CD8-positive, alpha-beta T cell (primary cell): ENCODE measurements at regions of chr22 and their contacts with region 1.

Region 1: DNA sequence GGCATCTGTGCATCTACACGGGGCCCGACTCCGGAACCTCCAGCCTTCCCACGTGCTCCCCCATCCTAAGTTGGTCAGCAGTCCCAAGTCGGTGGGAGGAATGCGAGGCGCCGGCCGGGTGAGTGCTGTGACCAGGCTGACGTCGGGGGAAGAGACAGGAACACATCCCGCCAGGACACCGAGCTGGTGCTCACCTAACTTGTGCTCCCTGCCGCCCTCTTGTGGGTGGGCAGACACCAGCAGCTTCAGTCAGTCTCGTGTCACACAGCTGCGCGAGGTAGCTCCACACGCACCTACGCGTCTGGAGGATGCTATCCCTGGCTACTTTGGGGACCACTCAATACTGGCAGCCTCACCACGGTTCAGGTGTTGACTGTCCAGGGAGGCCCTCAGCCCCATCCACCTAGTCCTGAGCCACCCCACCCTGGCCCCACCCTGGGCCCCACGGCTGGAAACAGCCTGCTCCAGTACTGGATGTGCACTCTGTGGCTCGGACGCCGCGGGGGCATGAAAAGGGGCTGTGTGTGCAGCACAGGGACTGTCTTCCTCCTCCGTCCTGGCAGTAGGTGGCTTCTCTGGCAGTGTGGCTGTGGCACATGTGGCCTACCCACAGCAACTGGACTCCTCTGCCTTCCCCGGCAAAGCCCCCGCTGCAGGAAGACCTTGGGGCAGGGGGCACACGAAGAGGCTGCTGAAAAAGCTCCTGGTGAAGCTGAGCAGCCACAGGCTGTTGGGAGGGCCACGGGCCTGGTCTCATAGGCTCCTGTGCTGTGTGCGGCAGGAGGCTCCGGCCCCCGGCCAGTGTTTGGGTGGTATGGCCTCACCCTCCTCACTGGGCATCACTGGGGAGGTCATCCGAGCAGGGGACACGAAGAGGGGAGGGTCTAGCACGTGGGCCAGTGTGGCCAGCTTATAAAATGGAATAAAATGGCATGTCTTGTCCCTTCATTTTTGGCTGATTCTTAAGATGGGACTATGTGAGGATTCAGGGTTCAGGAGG is 11.2 kb upstream of the BID start:
- DNase-seq: peak; percentile 48 to 82 (median 76)
- ATAC-seq: peak; percentile 67
- H3K4me3 ChIP-seq: no peak overlapping the region
- H3K4me3 Mint-ChIP-seq: no peak overlapping the region
- H3K27ac ChIP-seq: no peak overlapping the region
- H3K27ac Mint-ChIP-seq: no peak overlapping the region
- H3K4me1 ChIP-seq: peaks cover 21% of the 10 kb centered on the region
- H3K4me1 Mint-ChIP-seq: peaks cover 13% of the 10 kb centered on the region
- H3K27me3 ChIP-seq: no peaks in the 10 kb centered on the region
- H3K27me3 Mint-ChIP-seq: no peaks in the 10 kb centered on the region
- CTCF ChIP-seq: peak; percentile 74

Region 2: DNA sequence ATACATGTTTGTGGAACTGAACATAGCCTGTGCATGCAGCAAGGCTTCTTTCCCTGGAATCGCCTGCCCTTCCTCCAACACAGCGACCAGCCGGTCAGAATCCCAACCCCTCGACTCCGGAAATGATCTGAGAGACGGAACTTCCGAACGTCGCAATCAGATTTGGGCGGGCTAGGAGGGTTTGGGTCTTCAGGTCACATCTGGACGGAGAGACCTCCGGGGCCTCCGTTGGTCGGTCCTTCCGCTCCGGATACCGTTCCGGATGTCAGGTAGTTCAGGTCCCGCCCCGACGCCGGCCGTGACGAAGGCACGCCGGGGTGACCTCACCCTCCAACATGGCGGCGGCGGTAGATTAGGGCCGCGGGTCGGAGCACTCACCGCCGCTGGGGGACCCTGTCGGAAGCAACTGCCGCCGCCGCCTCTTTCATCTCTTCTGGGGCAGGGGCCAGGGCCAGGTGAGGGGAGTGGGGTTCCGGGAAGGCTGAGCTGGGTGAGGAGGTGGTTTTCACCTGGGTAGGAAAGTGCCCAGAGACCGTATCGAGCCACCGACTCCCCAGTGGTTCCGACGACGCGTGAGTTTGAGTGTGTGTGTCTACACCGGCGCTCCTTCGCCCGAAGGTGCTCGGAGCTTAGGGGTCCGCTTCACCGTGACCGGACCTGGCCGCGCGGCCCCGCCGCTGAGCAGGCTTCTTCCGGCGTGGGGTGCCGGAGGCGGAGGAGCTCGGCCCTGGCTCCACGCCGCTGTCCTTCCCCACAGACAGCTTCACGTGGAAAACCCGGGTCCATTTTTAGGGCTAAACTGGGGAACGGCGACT is 146.8 kb before region 1 on chr22 and contains the start of gene BCL2L13:
- CTCF ChIA-PET with region 1: no interaction called
- POLR2A ChIA-PET with region 1: no interaction called
- intact Hi-C with region 1: loop called in 1 of 2 experiments (anchors 5 kb)
- DNase-seq: peak; percentile 73 to 93 (median 89)
- ATAC-seq: peak; percentile 92
- H3K4me3 ChIP-seq: peak within 1 kb of the TSS; percentile 67 to 90
- H3K4me3 Mint-ChIP-seq: peak within 1 kb of the TSS; percentile 92
- H3K27ac ChIP-seq: peak within 1 kb of the TSS; percentile 98 to 99
- H3K27ac Mint-ChIP-seq: peak within 1 kb of the TSS; percentile 98
- H3K4me1 ChIP-seq: peaks cover 21% of the 10 kb centered on the region
- H3K4me1 Mint-ChIP-seq: peaks cover 29% of the 10 kb centered on the region
- H3K27me3 ChIP-seq: no peaks in the 10 kb centered on the region
- H3K27me3 Mint-ChIP-seq: no peaks in the 10 kb centered on the region
- CTCF ChIP-seq: no peak
- total RNA-seq, gene BCL2L13: 7.8 to 9.5 TPM

Region 3: GRCh38 chr22:17700778-17701177 is 84.7 kb before region 1 on chr22:
- CTCF ChIA-PET with region 1: no interaction called
- POLR2A ChIA-PET with region 1: no interaction called
- intact Hi-C with region 1: no loop called
- DNase-seq: no peak
- ATAC-seq: no peak
- H3K4me3 ChIP-seq: no peak overlapping the region
- H3K4me3 Mint-ChIP-seq: no peak overlapping the region
- H3K27ac ChIP-seq: no peak overlapping the region
- H3K27ac Mint-ChIP-seq: no peak overlapping the region
- H3K4me1 ChIP-seq: peaks cover 2% of the 10 kb centered on the region
- H3K4me1 Mint-ChIP-seq: peaks cover 6% of the 10 kb centered on the region
- H3K27me3 ChIP-seq: no peaks in the 10 kb centered on the region
- H3K27me3 Mint-ChIP-seq: no peaks in the 10 kb centered on the region
- CTCF ChIP-seq: no peak

Region 4: DNA sequence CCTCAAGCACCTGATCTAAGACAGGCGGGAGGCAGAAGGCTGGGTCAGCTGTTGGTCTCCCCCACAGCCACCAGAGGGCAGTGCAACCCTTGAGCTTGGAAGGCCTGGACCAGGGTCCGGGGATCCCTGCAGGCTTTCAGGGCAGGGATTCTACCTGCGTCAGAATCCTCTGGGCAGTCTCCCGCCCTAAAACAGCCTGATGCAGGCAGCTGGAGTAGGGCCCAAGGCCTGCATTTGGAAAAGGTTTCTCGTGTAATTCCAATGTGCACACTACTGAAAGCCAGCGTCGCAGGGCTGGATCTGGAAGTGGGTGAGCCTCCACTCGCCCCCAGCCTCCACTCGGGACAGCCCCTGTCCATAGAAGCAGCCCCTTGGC is 43.0 kb before region 1 on chr22:
- CTCF ChIA-PET with region 1: interaction called, 187 read pairs
- POLR2A ChIA-PET with region 1: interaction called, 3 read pairs
- intact Hi-C with region 1: loop called (anchors 1 kb)
- DNase-seq: peak; percentile 44 to 83 (median 67)
- ATAC-seq: peak; percentile 85
- H3K4me3 ChIP-seq: no peak overlapping the region
- H3K4me3 Mint-ChIP-seq: no peak overlapping the region
- H3K27ac ChIP-seq: no peak overlapping the region
- H3K27ac Mint-ChIP-seq: no peak overlapping the region
- H3K4me1 ChIP-seq: no peaks in the 10 kb centered on the region
- H3K4me1 Mint-ChIP-seq: peaks cover 7% of the 10 kb centered on the region
- H3K27me3 ChIP-seq: no peaks in the 10 kb centered on the region
- H3K27me3 Mint-ChIP-seq: no peaks in the 10 kb centered on the region
- CTCF ChIP-seq: peak; percentile 79

Region 5: DNA sequence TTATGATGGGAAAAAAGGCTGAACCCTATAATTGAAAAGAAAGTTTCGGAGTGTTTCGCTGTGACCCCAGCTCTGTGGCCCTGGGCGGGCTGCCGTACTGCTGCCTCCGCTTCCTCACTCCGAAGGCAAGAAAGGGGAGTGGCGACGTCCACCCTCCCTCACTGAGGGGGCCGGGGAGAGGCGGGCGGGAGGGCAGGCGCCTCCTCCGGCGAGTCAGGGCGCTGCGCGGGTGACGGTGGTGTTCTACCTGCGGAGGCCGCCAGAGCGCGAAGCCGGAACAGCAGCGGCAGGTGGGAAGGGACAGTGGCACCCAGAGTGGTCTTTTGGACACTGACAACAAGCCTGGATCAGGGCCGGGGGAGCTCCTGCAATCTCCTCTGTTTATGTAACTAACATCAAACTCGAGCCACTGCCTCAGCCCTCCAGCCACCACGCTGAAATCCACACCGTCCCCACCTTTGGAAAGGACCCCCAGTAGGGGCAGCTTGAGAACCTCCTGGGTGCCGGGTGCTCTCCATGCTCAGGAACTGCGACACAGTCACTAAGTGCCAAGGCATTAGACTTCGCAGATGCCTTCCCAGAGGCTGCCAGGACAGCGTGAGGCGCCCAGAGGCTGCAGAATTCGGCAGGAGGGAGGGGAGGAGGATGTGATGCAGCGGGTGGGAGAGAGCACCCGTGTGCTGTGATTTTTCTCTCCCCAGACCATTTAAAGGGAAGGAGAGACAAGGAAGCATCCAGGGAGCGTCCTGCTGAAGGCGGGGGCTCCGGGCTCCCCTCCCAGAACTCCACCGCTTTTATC is 36.7 kb before region 1 on chr22:
- CTCF ChIA-PET with region 1: interaction called, 187 read pairs
- POLR2A ChIA-PET with region 1: no interaction called
- intact Hi-C with region 1: no loop called
- DNase-seq: no peak
- ATAC-seq: no peak
- H3K4me3 ChIP-seq: no peak overlapping the region
- H3K4me3 Mint-ChIP-seq: no peak overlapping the region
- H3K27ac ChIP-seq: no peak overlapping the region
- H3K27ac Mint-ChIP-seq: no peak overlapping the region
- H3K4me1 ChIP-seq: no peaks in the 10 kb centered on the region
- H3K4me1 Mint-ChIP-seq: peaks cover 11% of the 10 kb centered on the region
- H3K27me3 ChIP-seq: no peaks in the 10 kb centered on the region
- H3K27me3 Mint-ChIP-seq: no peaks in the 10 kb centered on the region
- CTCF ChIP-seq: no peak

Region 6: GRCh38 chr22:17754233-17754925 is 31.1 kb before region 1 on chr22:
- CTCF ChIA-PET with region 1: interaction called, 21 read pairs
- POLR2A ChIA-PET with region 1: no interaction called
- intact Hi-C with region 1: loop called (anchors 1 kb)
- DNase-seq: peak in 6 of 9 experiments; percentile 38 to 65 (median 50)
- ATAC-seq: peak; percentile 54
- H3K4me3 ChIP-seq: no peak overlapping the region
- H3K4me3 Mint-ChIP-seq: no peak overlapping the region
- H3K27ac ChIP-seq: no peak overlapping the region
- H3K27ac Mint-ChIP-seq: peak overlapping the region; percentile 41
- H3K4me1 ChIP-seq: no peaks in the 10 kb centered on the region
- H3K4me1 Mint-ChIP-seq: peaks cover 19% of the 10 kb centered on the region
- H3K27me3 ChIP-seq: no peaks in the 10 kb centered on the region
- H3K27me3 Mint-ChIP-seq: no peaks in the 10 kb centered on the region
- CTCF ChIP-seq: peak; percentile 33

Region 7: GRCh38 chr22:17767233-17768065 is 18.0 kb before region 1 on chr22:
- CTCF ChIA-PET with region 1: interaction called, 55 read pairs
- POLR2A ChIA-PET with region 1: interaction called, 5 read pairs
- intact Hi-C with region 1: loop called (anchors 1 to 2 kb)
- DNase-seq: peak in 6 of 9 experiments; percentile 39 to 82 (median 62)
- ATAC-seq: peak; percentile 77
- H3K4me3 ChIP-seq: peak overlapping the region in 1 of 2 experiments; percentile 21
- H3K4me3 Mint-ChIP-seq: peak overlapping the region; percentile 70
- H3K27ac ChIP-seq: peak overlapping the region; percentile 26 to 37
- H3K27ac Mint-ChIP-seq: peak overlapping the region; percentile 87
- H3K4me1 ChIP-seq: peaks cover 45% of the 10 kb centered on the region
- H3K4me1 Mint-ChIP-seq: peaks cover 59% of the 10 kb centered on the region
- H3K27me3 ChIP-seq: no peaks in the 10 kb centered on the region
- H3K27me3 Mint-ChIP-seq: no peaks in the 10 kb centered on the region
- CTCF ChIP-seq: no peak

Region 8: DNA sequence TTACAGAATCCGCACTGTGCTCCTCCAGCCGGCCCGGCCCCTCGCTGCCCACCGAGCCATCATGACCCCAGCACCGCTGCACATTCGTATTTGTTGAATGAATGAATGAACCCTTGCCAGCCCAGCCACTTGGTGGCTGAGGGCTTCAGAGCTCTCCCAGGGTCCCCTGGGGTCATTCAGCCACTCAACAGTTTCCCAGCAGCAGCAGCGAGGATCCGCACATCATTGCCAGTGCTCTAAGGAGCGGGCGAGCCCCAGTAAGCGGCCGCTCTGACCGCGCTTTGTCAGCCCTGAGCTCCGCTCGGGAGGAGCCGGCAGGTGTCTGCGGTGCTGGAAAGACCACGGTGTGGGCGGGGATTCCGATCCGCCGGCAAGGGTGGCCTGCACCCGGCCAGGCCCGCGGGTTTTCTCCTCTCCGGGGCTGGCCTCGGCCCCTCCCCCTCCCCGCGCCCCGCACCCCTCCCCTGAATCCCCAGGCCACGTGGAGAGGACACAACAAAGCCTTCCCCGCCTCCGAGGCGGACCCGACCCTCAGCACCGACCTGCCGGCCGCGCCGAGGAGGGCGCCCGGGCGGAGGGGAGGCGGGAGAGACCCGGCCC is 11.8 kb before region 1 on chr22:
- CTCF ChIA-PET with region 1: interaction called, 55 read pairs
- POLR2A ChIA-PET with region 1: interaction called, 5 read pairs
- intact Hi-C with region 1: loop called (anchors 1 to 2 kb)
- DNase-seq: peak; percentile 26 to 84 (median 68)
- ATAC-seq: peak; percentile 47
- H3K4me3 ChIP-seq: peak overlapping the region; percentile 65
- H3K4me3 Mint-ChIP-seq: peak overlapping the region; percentile 90
- H3K27ac ChIP-seq: peak overlapping the region; percentile 19 to 36
- H3K27ac Mint-ChIP-seq: peak overlapping the region; percentile 90
- H3K4me1 ChIP-seq: peaks cover 76% of the 10 kb centered on the region
- H3K4me1 Mint-ChIP-seq: peaks cover 78% of the 10 kb centered on the region
- H3K27me3 ChIP-seq: no peaks in the 10 kb centered on the region
- H3K27me3 Mint-ChIP-seq: no peaks in the 10 kb centered on the region
- CTCF ChIP-seq: no peak